Transverse colon (tissue), 4 donors: ENCODE measurements at regions of chr17 and their contacts with region 1.

Region 1: DNA sequence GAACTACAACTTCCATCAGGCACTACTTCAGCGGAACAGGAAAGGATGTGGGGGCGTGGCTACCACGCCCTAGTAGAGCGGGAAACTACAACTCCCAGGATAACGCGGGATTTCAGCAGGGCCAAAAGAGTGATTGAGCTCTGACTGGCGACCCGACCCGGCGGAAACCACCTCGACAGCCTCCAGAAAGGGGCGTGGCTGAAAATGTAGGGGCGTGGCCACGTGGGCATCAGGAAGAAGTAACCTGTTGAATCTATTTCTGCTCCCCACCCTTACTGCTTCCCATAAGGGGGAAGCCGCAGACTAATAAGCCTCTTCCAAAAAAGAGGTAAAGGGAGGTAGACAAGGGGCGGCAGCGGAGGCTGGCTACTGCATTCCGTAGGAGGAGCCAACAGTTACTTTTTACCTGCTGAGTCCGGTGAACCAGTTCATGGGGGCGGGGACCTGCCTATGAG is at the start of gene TMEM102:
- DNase-seq: peak; percentile 98
- H3K4me3 ChIP-seq: peak within 1 kb of the TSS; percentile 33 to 79 (median 53)
- H3K27ac ChIP-seq: peak within 1 kb of the TSS; percentile 82 to 90 (median 87)
- H3K4me1 ChIP-seq: peaks cover 22 to 44% (median 37%) of the 10 kb centered on the region in 4 donors
- H3K27me3 ChIP-seq: peaks cover 25% of the 10 kb centered on the region
- CTCF ChIP-seq: no peak
- EP300 ChIP-seq: no peak
- POLR2A ChIP-seq: peak; percentile 82
- total RNA-seq, gene TMEM102: 8.8 to 26.1 (median 16.3) TPM

Region 2: DNA sequence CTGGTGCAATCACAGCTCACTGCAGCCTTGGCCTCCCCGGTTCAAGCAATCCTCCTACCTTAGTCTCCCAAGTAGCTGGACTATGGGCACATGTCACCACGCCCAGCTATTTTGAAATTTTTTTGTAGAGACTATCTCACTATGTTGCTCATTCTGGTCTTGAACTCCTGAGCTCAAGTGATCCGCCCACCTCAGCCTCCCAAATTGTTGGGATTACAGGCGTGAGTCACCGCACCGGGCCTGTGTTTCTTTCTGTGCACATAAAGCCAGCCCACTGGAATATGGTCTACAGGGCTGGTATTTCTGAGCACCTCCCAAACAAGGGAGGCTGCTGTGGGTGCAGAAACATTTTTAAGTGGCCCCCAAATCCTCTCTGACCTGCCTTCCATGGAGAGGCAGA is 71.9 kb before region 1 on chr17:
- in situ Hi-C with region 1: loop called in 2 of 4 experiments (anchors 10 kb)
- intact Hi-C with region 1: no loop called
- DNase-seq: no peak
- H3K4me3 ChIP-seq: no peak overlapping the region
- H3K27ac ChIP-seq: no peak overlapping the region
- H3K4me1 ChIP-seq: no peaks in the 10 kb centered on the region
- H3K27me3 ChIP-seq: no peaks in the 10 kb centered on the region
- CTCF ChIP-seq: no peak
- EP300 ChIP-seq: no peak
- POLR2A ChIP-seq: no peak

Region 3: GRCh38 chr17:7484067-7484918 is 49.0 kb after region 1 on chr17 and contains the start of gene POLR2A:
- in situ Hi-C with region 1: no loop called
- intact Hi-C with region 1: loop called (anchors 2 kb)
- DNase-seq: peak; percentile 99
- H3K4me3 ChIP-seq: peak within 1 kb of the TSS; percentile 61 to 78 (median 67)
- H3K27ac ChIP-seq: peak within 1 kb of the TSS; percentile 97 to 99 (median 98)
- H3K4me1 ChIP-seq: peaks cover 25 to 58% (median 40%) of the 10 kb centered on the region in 4 donors
- H3K27me3 ChIP-seq: no peaks in the 10 kb centered on the region
- CTCF ChIP-seq: peak in 2 of 5 experiments; percentile 7 to 16
- EP300 ChIP-seq: peak; percentile 53
- POLR2A ChIP-seq: peak; percentile 100
- total RNA-seq, gene POLR2A: 91.3 to 321 (median 127) TPM